ENCODE measurements at regions of chr11 and their contacts with region 1.

Region 1: GRCh38 chr11:60913793-60914632 is at the start of gene TMEM109:
- DNase-seq: peak; percentile 75 to 95 (median 89)
- ATAC-seq: peak; percentile 55
- H3K4me3 ChIP-seq: peak within 1 kb of the TSS; percentile 66 to 85
- H3K4me3 Mint-ChIP-seq: peak within 1 kb of the TSS; percentile 95
- H3K27ac ChIP-seq: peak within 1 kb of the TSS; percentile 77 to 91
- H3K27ac Mint-ChIP-seq: peak within 1 kb of the TSS; percentile 97
- H3K4me1 ChIP-seq: peaks cover 40% of the 10 kb centered on the region
- H3K4me1 Mint-ChIP-seq: peaks cover 77% of the 10 kb centered on the region
- H3K27me3 ChIP-seq: no peaks in the 10 kb centered on the region
- H3K27me3 Mint-ChIP-seq: no peaks in the 10 kb centered on the region
- CTCF ChIP-seq: no peak
- total RNA-seq, gene TMEM109: 46.7 to 52.2 TPM

Region 2: GRCh38 chr11:60899046-60899936 is 14.7 kb before region 1 on chr11:
- CTCF ChIA-PET with region 1: interaction called, 77 read pairs
- POLR2A ChIA-PET with region 1: interaction called, 41 read pairs
- intact Hi-C with region 1: loop called in 1 of 2 experiments (anchors 2 kb)
- DNase-seq: peak in 4 of 9 experiments; percentile 28 to 70 (median 47)
- ATAC-seq: peak; percentile 88
- H3K4me3 ChIP-seq: no peak overlapping the region
- H3K4me3 Mint-ChIP-seq: no peak overlapping the region
- H3K27ac ChIP-seq: no peak overlapping the region
- H3K27ac Mint-ChIP-seq: no peak overlapping the region
- H3K4me1 ChIP-seq: peaks cover 10% of the 10 kb centered on the region
- H3K4me1 Mint-ChIP-seq: peaks cover 16% of the 10 kb centered on the region
- H3K27me3 ChIP-seq: no peaks in the 10 kb centered on the region
- H3K27me3 Mint-ChIP-seq: no peaks in the 10 kb centered on the region
- CTCF ChIP-seq: peak; percentile 99

Region 3: DNA sequence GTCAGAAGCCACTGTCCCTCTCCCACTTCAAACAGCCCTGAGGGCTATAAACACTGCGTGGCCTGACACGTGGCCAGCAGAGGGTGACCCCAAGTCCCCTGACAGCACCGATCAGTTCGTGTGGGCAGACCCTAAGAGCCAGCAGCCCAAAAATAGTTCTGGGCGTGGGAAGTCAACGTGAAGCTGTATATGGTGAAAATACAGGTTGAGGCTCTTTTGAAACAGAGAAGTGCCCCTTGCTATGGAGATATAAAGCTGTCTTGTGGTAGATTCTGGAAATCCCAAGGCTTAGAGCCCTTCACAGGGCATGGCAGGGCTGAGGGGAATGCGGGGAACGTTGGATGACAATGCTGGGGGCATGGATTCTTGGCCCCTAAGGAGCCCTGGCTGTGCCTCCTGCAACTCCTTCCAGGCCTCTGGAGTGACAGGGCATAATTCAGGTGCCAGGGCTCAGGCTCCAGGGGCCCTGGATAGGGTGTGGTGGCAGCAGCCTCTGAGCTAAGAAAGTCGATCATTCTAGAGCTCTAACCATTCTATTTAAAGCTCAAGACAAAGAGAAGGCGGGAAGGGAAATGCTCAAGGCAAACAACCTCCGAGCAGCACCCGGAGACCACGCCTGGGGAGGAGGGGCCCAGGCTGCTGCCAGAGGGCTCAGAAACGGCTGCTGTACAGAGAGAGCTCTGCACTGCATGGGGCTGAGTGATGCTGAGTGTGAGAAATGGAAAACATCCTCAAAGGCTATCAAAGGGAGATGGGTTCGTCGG is 127.9 kb after region 1 on chr11:
- CTCF ChIA-PET with region 1: interaction called, 5 read pairs
- POLR2A ChIA-PET with region 1: interaction called, 10 read pairs
- intact Hi-C with region 1: no loop called
- DNase-seq: peak; percentile 63 to 94 (median 85)
- ATAC-seq: peak; percentile 98
- H3K4me3 ChIP-seq: peak overlapping the region; percentile 10 to 17
- H3K4me3 Mint-ChIP-seq: peak overlapping the region; percentile 75
- H3K27ac ChIP-seq: peak overlapping the region; percentile 60 to 91
- H3K27ac Mint-ChIP-seq: peak overlapping the region; percentile 98
- H3K4me1 ChIP-seq: peaks cover 46% of the 10 kb centered on the region
- H3K4me1 Mint-ChIP-seq: peaks cover 48% of the 10 kb centered on the region
- H3K27me3 ChIP-seq: no peaks in the 10 kb centered on the region
- H3K27me3 Mint-ChIP-seq: no peaks in the 10 kb centered on the region
- CTCF ChIP-seq: no peak

Region 4: GRCh38 chr11:61129639-61130523 is 215.9 kb after region 1 on chr11:
- CTCF ChIA-PET with region 1: interaction called, 4 read pairs
- POLR2A ChIA-PET with region 1: interaction called, 6 read pairs
- intact Hi-C with region 1: loop called in 1 of 2 experiments (anchors 1 kb)
- DNase-seq: peak; percentile 76 to 95 (median 91)
- ATAC-seq: peak; percentile 91
- H3K4me3 ChIP-seq: no peak overlapping the region
- H3K4me3 Mint-ChIP-seq: peak overlapping the region; percentile 46
- H3K27ac ChIP-seq: no peak overlapping the region
- H3K27ac Mint-ChIP-seq: peak overlapping the region; percentile 64
- H3K4me1 ChIP-seq: peaks cover 17% of the 10 kb centered on the region
- H3K4me1 Mint-ChIP-seq: peaks cover 21% of the 10 kb centered on the region
- H3K27me3 ChIP-seq: no peaks in the 10 kb centered on the region
- H3K27me3 Mint-ChIP-seq: no peaks in the 10 kb centered on the region
- CTCF ChIP-seq: peak; percentile 100

Region 5: GRCh38 chr11:61429691-61430582 is 515.9 kb after region 1 on chr11 and contains the starts of genes CPSF7 and SDHAF2:
- CTCF ChIA-PET with region 1: no interaction called
- POLR2A ChIA-PET with region 1: no interaction called
- intact Hi-C with region 1: loop called (anchors 2 to 5 kb)
- DNase-seq: peak; percentile 93 to 99 (median 98)
- ATAC-seq: peak; percentile 80
- H3K4me3 ChIP-seq: peak within 1 kb of the TSS; percentile 70 to 95
- H3K4me3 Mint-ChIP-seq: peak within 1 kb of the TSS; percentile 97
- H3K27ac ChIP-seq: peak within 1 kb of the TSS; percentile 98 to 100
- H3K27ac Mint-ChIP-seq: peak within 1 kb of the TSS; percentile 100
- H3K4me1 ChIP-seq: peaks cover 53% of the 10 kb centered on the region
- H3K4me1 Mint-ChIP-seq: peaks cover 72% of the 10 kb centered on the region
- H3K27me3 ChIP-seq: no peaks in the 10 kb centered on the region
- H3K27me3 Mint-ChIP-seq: no peaks in the 10 kb centered on the region
- CTCF ChIP-seq: no peak
- total RNA-seq, gene CPSF7: 106 to 111 TPM
- total RNA-seq, gene SDHAF2: 31.4 to 33.0 TPM

Measured in CD8-positive, alpha-beta T cell (primary cell).